AG04450 (cell line): ENCODE measurements at regions of chr10 and their contacts with region 1.

Region 1: GRCh38 chr10:119207367-119207668 is at the start of gene GRK5:
- DNase-seq: peak; percentile 92
- H3K4me3 ChIP-seq: peak within 1 kb of the TSS; percentile 85
- H3K27ac ChIP-seq: peak within 1 kb of the TSS; percentile 47
- H3K27me3 ChIP-seq: no peaks in the 10 kb centered on the region
- CTCF ChIP-seq: no peak
- polyA plus RNA-seq, gene GRK5: 27.6 and 29.3 TPM in 2 replicates

Region 2: GRCh38 chr10:119217991-119218490 is 10.7 kb after region 1 on chr10:
- CTCF ChIA-PET with region 1: interaction called, 26 read pairs
- POLR2A ChIA-PET with region 1: interaction called, 14 read pairs
- DNase-seq: no peak
- H3K4me3 ChIP-seq: no peak overlapping the region
- H3K27ac ChIP-seq: no peak overlapping the region
- H3K27me3 ChIP-seq: no peaks in the 10 kb centered on the region
- CTCF ChIP-seq: no peak

Region 3: DNA sequence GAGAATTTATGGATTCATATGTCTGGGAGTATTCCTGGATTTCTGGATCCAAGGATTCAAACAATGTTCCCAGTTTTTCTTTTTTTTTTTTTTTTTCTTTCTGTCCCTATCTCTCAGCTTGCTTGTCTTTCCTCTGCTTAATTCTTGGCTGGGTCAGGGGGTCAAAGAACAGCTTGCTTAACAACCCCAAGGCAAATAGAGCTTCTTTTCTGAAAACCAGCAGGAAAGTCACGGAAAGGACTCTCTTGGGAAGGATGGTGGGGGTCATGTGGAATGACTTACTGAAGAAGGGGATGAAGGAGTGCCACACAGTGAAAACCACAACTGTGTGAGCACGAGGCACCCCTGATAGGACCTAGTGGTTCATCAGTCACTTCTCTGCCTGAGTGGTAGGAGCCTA is 36.2 kb after region 1 on chr10:
- CTCF ChIA-PET with region 1: interaction called, 23 read pairs
- POLR2A ChIA-PET with region 1: interaction called, 9 read pairs
- DNase-seq: no peak
- H3K4me3 ChIP-seq: no peak overlapping the region
- H3K27ac ChIP-seq: no peak overlapping the region
- H3K27me3 ChIP-seq: no peaks in the 10 kb centered on the region
- CTCF ChIP-seq: no peak

Region 4: DNA sequence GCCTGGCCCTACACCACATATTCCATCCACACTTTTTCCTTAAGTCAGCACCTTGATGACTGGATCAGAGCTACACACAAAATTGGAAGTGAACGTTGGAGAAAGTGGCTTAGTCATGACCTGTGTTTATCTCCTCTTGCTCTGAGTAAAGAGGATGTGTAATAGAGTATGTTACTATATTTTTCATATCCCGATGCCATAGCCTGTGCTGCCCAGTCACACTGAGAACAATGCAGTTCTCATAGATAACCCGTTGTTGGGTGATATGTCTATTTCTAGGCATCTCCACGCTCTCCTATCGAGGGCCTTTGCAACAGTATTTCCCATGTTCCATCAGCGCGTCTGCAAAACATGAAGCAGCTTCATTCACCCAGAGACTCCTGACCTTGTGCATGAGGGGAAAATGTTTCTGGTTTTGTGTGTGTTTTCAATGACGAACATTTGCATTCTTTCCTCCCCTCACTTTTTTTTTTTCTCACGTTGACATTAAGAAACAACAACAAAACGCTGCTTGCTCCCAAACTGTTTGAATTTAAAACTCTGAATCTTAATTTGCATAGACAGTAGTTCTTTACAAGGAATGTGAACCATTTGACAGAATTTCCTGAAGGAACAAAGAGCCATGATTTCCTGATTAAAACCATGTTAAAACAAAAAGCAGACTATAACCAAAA is 43.5 kb after region 1 on chr10:
- CTCF ChIA-PET with region 1: interaction called, 12 read pairs
- POLR2A ChIA-PET with region 1: interaction called, 16 read pairs
- DNase-seq: peak; percentile 72
- H3K4me3 ChIP-seq: no peak overlapping the region
- H3K27ac ChIP-seq: peak overlapping the region; percentile 78
- H3K27me3 ChIP-seq: no peaks in the 10 kb centered on the region
- CTCF ChIP-seq: no peak

Region 5: GRCh38 chr10:119445311-119445934 is 238.1 kb after region 1 on chr10:
- CTCF ChIA-PET with region 1: interaction called, 14 read pairs
- POLR2A ChIA-PET with region 1: interaction called, 10 read pairs
- DNase-seq: peak; percentile 50
- H3K4me3 ChIP-seq: no peak overlapping the region
- H3K27ac ChIP-seq: no peak overlapping the region
- H3K27me3 ChIP-seq: no peaks in the 10 kb centered on the region
- CTCF ChIP-seq: peak; percentile 93

Region 6: GRCh38 chr10:119489991-119490326 is 282.6 kb after region 1 on chr10:
- CTCF ChIA-PET with region 1: interaction called, 11 read pairs
- POLR2A ChIA-PET with region 1: interaction called, 6 read pairs
- DNase-seq: no peak
- H3K4me3 ChIP-seq: no peak overlapping the region
- H3K27ac ChIP-seq: no peak overlapping the region
- H3K27me3 ChIP-seq: no peaks in the 10 kb centered on the region
- CTCF ChIP-seq: no peak

Region 7: GRCh38 chr10:119542988-119543813 is 335.9 kb after region 1 on chr10:
- CTCF ChIA-PET with region 1: interaction called, 6 read pairs
- POLR2A ChIA-PET with region 1: interaction called, 10 read pairs
- DNase-seq: no peak
- H3K4me3 ChIP-seq: peak overlapping the region; percentile 80
- H3K27ac ChIP-seq: peak overlapping the region; percentile 11
- H3K27me3 ChIP-seq: peaks cover 1% of the 10 kb centered on the region
- CTCF ChIP-seq: peak; percentile 61